Left colon (tissue), 2 donors: ENCODE measurements at regions of chr10 and their contacts with region 1.

Region 1: GRCh38 chr10:118720685-118721538 is 33.9 kb downstream of the CACUL1 start:
- DNase-seq: peak in 1 of 2 donors; percentile 58
- ATAC-seq: peak; percentile 64

Region 2: GRCh38 chr10:118447478-118448270 is 273.2 kb before region 1 on chr10:
- intact Hi-C with region 1: no loop called
- DNase-seq: peak; percentile 67 to 72
- ATAC-seq: peak; percentile 93

Region 3: GRCh38 chr10:118568327-118568848 is 152.5 kb before region 1 on chr10:
- intact Hi-C with region 1: loop called (anchors 2 to 10 kb)
- DNase-seq: peak in 1 of 2 donors; percentile 35
- ATAC-seq: peak; percentile 79